Activated naive CD4-positive, alpha-beta T cell treated with anti-CD3 and anti-CD28 coated beads, Interleukin-2, amount 10 ng/mL, durations not matched to agents 7 days and 5 days (primary cell): ENCODE measurements at regions of chr19 and their contacts with region 1.

Region 1: GRCh38 chr19:47243776-47244547 is 12.4 kb upstream of the CCDC9 start:
- DNase-seq: peak; percentile 92
- H3K4me3 Mint-ChIP-seq: peak overlapping the region; percentile 63
- H3K27ac Mint-ChIP-seq: peak overlapping the region; percentile 89
- H3K4me1 Mint-ChIP-seq: peaks cover 40% of the 10 kb centered on the region
- H3K27me3 Mint-ChIP-seq: peaks cover 22% of the 10 kb centered on the region

Region 2: DNA sequence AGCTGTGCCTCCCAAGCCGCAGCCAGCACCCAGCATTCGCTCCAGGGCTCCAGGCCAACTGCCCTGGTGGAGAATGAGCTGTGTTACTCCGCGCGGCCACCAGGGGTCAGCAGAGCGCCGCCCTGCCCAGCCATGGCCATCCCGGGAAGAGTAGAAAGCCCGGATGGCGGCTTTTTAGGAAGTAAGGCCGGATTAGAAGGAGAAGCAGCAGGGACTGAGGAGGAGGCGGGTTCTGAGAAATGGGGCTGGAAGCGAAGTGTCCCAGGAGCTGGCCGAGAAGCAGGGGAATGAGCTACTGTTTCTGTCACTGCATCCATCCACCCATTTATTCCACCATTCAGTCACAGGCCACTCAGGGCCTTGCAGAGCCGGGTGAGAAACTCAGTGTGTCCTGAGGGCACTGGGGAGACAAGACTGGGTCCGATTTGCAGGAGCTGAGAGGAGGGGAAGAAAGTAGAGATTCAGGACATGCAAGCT is 230.9 kb before region 1 on chr19:
- CTCF ChIA-PET with region 1: interaction called, 33 read pairs
- DNase-seq: peak; percentile 72
- H3K4me3 Mint-ChIP-seq: no peak overlapping the region
- H3K27ac Mint-ChIP-seq: no peak overlapping the region
- H3K4me1 Mint-ChIP-seq: peaks cover 4% of the 10 kb centered on the region
- H3K27me3 Mint-ChIP-seq: peaks cover 75% of the 10 kb centered on the region

Region 3: DNA sequence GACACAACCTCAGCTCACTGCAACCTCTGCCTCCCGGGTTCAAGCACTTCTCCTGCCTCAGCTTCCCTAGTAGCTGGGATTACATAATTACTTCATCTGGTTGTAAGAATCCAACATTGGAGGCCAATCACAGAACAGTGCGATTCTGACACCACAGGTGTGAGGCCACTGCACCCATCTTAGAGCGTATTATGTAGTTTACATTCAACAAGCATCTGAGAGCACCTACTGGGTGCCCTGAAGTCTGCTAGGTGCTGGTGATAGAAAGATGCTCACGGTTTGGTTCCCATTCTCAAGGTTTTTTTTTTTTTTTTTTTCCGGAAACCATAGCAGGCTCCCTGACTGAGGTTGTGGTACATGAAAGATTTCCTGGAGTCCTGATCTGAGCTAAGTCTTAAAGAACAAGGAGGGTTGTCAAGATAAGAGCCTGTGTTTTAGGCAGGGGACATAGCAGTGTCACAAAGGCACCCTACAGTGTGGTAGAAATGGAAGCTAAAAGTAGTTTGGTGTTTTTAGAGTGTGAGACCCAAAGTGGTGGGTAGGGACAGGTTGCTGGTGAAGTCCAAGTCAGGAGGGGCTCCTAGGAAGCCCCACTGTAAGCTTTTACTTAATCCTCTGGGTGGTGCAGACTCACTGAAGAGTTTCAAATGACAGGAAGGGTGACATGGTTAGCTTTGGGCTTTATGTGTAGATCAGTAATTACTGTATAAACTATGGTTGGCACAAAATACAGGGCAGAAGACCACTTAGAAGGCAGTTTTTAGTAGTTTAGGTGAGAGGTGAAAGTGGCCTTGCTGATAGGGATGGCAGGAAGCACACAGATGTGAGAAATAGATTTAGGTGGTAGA is 98.1 kb before region 1 on chr19:
- CTCF ChIA-PET with region 1: interaction called, 85 read pairs
- DNase-seq: peak; percentile 32
- H3K4me3 Mint-ChIP-seq: peak overlapping the region; percentile 25
- H3K27ac Mint-ChIP-seq: peak overlapping the region; percentile 92
- H3K4me1 Mint-ChIP-seq: peaks cover 66% of the 10 kb centered on the region
- H3K27me3 Mint-ChIP-seq: no peaks in the 10 kb centered on the region

Region 4: GRCh38 chr19:47157431-47158321 is 86.3 kb before region 1 on chr19:
- CTCF ChIA-PET with region 1: interaction called, 21 read pairs
- DNase-seq: peak; percentile 64
- H3K4me3 Mint-ChIP-seq: peak overlapping the region; percentile 67
- H3K27ac Mint-ChIP-seq: peak overlapping the region; percentile 97
- H3K4me1 Mint-ChIP-seq: peaks cover 69% of the 10 kb centered on the region
- H3K27me3 Mint-ChIP-seq: no peaks in the 10 kb centered on the region

Region 5: DNA sequence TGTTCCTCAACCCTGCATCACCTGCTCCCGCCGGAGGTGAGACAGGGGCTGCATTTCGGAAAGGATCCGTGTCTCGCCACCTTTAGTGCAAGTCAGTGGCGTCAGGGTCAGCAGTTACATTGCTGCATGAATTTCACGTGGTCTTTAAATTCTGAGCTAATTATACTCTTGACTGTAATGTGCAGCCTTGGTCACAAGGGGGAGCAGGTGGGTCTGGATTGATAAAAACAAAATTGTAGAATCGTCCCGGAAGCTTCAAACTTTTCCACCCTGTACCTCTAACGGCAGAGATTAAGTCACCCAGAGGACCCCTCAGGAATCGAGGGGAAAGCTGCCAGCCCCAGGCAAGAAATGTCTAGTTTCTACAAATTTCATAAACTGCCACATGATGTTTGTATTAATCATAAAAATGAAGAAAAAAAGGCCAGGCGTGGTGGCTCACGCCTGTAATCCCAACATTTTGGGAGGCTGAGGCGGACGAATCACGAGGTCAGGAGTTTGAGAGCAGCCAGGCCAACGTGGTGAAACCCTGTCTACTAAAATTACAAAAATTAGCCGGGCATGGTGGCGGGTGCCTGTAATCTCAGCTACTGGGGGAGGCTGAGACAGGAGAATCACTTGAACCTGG is 33.2 kb before region 1 on chr19:
- CTCF ChIA-PET with region 1: interaction called, 197 read pairs
- DNase-seq: peak; percentile 88
- H3K4me3 Mint-ChIP-seq: no peak overlapping the region
- H3K27ac Mint-ChIP-seq: peak overlapping the region; percentile 86
- H3K4me1 Mint-ChIP-seq: peaks cover 19% of the 10 kb centered on the region
- H3K27me3 Mint-ChIP-seq: no peaks in the 10 kb centered on the region

Region 6: DNA sequence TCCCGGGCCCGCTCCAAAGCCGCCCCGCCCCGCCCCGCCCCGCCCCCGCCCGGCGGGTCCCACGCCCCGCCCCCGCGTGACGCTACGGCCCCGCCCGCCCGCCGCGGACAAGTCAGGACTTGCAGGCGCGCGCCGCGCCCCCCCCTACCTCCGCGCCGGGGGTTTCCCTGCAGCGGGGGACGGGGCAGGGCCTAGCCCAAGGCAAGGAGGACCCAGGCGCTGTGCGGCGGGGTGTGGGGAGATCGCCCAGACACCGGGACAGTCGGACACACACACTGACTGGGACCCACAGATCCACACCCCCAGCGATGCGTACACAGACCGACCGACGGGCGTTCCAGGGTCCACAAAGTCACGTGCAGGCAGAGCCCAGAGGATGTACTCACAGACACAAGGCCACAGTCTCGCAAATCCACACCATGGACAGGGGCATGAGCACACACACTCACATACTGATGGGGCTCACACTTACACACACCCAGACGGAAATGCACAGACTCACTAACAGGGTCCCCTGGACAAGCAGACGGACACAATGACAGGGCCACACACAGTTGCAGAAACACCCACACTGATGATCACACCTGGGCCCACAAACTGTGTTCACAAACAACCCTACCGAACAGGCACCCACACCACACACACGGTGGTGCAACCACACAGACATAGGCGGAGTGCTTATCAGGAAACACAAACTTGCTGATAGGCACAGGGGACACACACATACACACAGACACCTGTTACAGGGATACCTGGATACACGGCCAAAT is 12.6 kb before region 1 on chr19:
- CTCF ChIA-PET with region 1: interaction called, 25 read pairs
- DNase-seq: peak; percentile 94
- H3K4me3 Mint-ChIP-seq: peak overlapping the region; percentile 67
- H3K27ac Mint-ChIP-seq: peak overlapping the region; percentile 76
- H3K4me1 Mint-ChIP-seq: peaks cover 31% of the 10 kb centered on the region
- H3K27me3 Mint-ChIP-seq: peaks cover 23% of the 10 kb centered on the region

Region 7: GRCh38 chr19:47315125-47315821 is 71.3 kb after region 1 on chr19:
- CTCF ChIA-PET with region 1: no interaction called
- DNase-seq: no peak
- H3K4me3 Mint-ChIP-seq: no peak overlapping the region
- H3K27ac Mint-ChIP-seq: no peak overlapping the region
- H3K4me1 Mint-ChIP-seq: no peaks in the 10 kb centered on the region
- H3K27me3 Mint-ChIP-seq: peaks cover 43% of the 10 kb centered on the region

Region 8: DNA sequence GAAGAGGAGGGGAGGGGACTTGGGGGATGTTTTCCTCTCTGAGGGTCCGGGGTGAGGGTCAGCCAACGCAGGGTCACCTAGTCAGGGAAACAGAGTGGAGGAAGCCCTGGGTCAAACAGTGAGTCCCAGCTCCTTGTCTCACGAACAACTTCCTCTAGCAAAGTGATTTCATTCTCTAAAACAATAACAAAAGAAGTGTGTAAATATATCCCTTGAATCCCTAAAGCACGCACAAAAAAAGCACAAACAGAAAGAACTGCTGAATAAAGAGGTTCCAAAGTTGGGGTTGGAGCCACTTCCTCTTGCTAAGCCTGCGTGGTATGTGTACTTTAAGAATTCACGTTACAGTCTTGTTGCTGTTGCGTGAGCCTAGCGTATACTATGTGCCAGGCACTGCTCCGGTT is 86.5 kb after region 1 on chr19:
- CTCF ChIA-PET with region 1: no interaction called
- DNase-seq: no peak
- H3K4me3 Mint-ChIP-seq: no peak overlapping the region
- H3K27ac Mint-ChIP-seq: peak overlapping the region; percentile 33
- H3K4me1 Mint-ChIP-seq: peaks cover 8% of the 10 kb centered on the region
- H3K27me3 Mint-ChIP-seq: peaks cover 37% of the 10 kb centered on the region